Endothelial cell of umbilical vein (primary cell): ENCODE measurements at regions of chr20 and their contacts with region 1.

Region 1: GRCh38 chr20:14951707-14952418 is 614.5 kb upstream of the FLRT3 start:
- DNase-seq: peak; percentile 84
- H3K4me3 ChIP-seq: no peak overlapping the region
- H3K27ac ChIP-seq: peak overlapping the region; percentile 84
- H3K4me1 ChIP-seq: peaks cover 21% of the 10 kb centered on the region
- H3K27me3 ChIP-seq: no peaks in the 10 kb centered on the region
- CTCF ChIP-seq: no peak
- POLR2A ChIP-seq: no peak

Region 2: DNA sequence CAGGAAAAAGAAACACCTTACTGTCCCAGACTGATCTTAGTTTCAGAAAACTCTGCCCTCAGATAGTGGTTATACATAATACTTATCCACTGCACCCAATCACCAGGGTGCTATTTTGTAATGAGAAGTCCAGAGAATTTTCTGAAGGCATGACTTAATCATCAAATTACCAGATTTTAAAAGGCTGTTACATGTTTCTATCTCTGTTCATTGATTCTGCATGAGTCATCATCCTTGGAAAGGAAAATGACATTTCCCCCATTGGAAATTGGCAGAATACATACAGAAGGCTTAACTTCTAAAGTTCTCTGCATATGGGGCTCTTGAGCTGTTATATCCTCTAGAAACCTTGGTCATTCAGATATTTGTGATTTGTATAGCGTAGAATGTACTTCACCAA is 26.6 kb before region 1 on chr20:
- CTCF ChIA-PET with region 1: interaction called, 3 read pairs
- POLR2A ChIA-PET with region 1: interaction called, 3 read pairs
- dilution Hi-C with region 1: no loop called
- intact Hi-C with region 1: loop called (anchors 2 kb)
- DNase-seq: peak; percentile 79
- H3K4me3 ChIP-seq: no peak overlapping the region
- H3K27ac ChIP-seq: peak overlapping the region; percentile 20
- H3K4me1 ChIP-seq: peaks cover 40% of the 10 kb centered on the region
- H3K27me3 ChIP-seq: no peaks in the 10 kb centered on the region
- CTCF ChIP-seq: no peak
- POLR2A ChIP-seq: no peak

Region 3: DNA sequence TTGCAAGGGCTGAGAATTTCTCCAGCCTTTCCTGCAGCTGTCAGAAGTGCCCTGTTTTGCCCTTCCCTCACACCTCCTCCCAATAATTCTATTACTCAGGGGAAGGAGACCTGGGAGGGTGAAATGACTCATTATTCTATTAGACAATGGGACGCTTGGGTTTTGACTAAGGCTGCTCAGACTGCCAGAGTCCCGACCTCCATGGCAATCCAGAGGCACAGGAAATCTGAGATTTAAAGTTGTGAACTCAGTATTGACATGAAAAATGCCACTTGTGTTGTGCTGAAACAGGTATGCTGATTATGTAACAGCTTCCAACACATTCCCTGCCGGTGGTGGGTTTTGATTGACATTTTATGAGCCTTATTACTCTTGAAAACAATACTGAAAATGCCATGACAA is 11.4 kb after region 1 on chr20:
- CTCF ChIA-PET with region 1: interaction called, 17 read pairs
- POLR2A ChIA-PET with region 1: interaction called, 4 read pairs
- dilution Hi-C with region 1: no loop called
- intact Hi-C with region 1: no loop called
- DNase-seq: peak; percentile 90
- H3K4me3 ChIP-seq: peak overlapping the region in 1 of 3 experiments; percentile 3
- H3K27ac ChIP-seq: peak overlapping the region; percentile 70
- H3K4me1 ChIP-seq: peaks cover 14% of the 10 kb centered on the region
- H3K27me3 ChIP-seq: no peaks in the 10 kb centered on the region
- CTCF ChIP-seq: no peak
- POLR2A ChIP-seq: no peak

Region 4: DNA sequence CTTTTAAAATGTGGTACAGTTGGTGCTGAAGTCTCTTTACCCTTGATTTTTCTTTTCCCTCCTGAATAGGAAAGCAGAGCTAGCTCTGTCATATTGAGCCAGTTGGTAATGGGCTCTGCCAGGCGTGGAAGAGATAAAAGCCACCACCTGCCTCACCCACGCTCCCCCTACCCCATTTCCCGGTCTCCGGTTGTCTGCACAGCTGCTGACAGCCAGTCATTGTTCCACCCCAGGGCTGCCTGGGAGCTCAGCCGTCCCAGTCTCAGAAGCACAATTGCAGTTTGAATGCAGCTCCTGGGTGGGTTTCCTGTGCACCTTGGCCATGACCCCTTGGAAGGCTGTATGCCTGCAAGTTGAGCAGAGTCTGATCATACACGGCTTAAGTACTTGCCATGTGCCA is 60.7 kb after region 1 on chr20:
- CTCF ChIA-PET with region 1: no interaction called
- POLR2A ChIA-PET with region 1: no interaction called
- dilution Hi-C with region 1: no loop called
- intact Hi-C with region 1: no loop called
- DNase-seq: no peak
- H3K4me3 ChIP-seq: no peak overlapping the region
- H3K27ac ChIP-seq: no peak overlapping the region
- H3K4me1 ChIP-seq: no peaks in the 10 kb centered on the region
- H3K27me3 ChIP-seq: peaks cover 3 to 6% of the 10 kb centered on the region in 2 experiments
- CTCF ChIP-seq: no peak
- POLR2A ChIP-seq: no peak